ENCODE measurements at regions of chr1 and their contacts with region 1.

Region 1: DNA sequence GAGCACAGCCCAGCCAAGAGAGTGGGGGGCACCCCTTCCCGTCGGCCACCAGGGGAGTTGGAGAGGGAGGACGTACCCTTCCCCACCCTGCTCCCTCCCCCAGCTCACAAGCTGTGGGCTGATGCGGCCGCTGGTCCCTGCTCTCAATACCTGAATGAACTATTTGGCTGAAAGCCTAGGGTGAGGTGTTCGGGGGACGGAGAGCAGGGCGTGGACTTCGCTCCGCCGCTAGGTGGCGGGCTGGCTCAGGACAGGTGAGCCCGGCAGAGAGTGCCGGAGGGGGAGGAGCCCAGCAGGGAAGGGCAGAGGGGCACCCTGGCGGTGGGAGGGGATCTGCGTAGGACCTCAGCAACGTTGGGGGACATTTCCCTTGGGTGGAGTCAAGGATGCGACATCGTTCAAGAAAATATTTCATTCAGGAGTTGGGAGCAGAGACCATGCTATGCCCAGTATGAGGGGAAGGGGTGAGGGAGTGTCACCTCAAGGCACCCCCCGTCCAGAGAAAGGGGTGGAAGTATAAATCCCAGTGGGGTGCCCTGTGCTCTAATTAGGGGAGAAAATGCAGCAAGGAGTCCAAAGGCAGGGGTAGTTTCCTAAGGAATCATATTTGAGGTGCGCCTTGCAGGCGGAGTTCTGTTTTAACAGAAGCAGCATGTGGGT is 12.0 kb upstream of the RHBG start:
- DNase-seq: no peak
- H3K4me3 ChIP-seq: no peak overlapping the region
- H3K27me3 ChIP-seq: peaks cover 19% of the 10 kb centered on the region
- CTCF ChIP-seq: peak; percentile 98

Region 2: GRCh38 chr1:156336242-156336641 is 20.8 kb before region 1 on chr1:
- CTCF ChIA-PET with region 1: interaction called, 13 read pairs
- POLR2A ChIA-PET with region 1: no interaction called
- DNase-seq: no peak
- H3K4me3 ChIP-seq: no peak overlapping the region
- H3K27me3 ChIP-seq: no peaks in the 10 kb centered on the region
- CTCF ChIP-seq: 0 out of 2 replicates have a peak, but pooled peaks have one; percentile 15

Region 3: DNA sequence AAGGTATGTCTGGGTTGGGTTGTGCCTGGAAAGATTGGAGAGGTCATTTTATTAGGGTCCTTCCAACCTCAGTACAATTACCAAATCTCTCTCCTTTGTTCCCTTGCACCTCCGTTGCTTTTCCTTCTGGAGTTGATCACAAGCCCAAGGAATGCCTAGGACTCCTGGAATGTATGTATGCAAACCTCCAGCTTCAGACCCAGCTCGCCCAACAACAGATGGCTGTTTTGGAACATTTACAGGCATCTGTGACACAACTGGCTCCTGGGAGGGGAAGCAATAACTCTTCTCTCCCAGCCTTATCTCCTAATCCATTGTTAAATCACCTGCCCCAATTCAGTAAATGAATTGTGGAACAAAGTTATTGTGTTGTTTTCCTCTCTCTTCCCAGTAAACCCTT is 10.4 kb before region 1 on chr1:
- CTCF ChIA-PET with region 1: interaction called, 28 read pairs
- POLR2A ChIA-PET with region 1: no interaction called
- DNase-seq: peak; percentile 53
- H3K4me3 ChIP-seq: no peak overlapping the region
- H3K27me3 ChIP-seq: no peaks in the 10 kb centered on the region; the same call in 1 of the 2 replicates
- CTCF ChIP-seq: no peak

Region 4: DNA sequence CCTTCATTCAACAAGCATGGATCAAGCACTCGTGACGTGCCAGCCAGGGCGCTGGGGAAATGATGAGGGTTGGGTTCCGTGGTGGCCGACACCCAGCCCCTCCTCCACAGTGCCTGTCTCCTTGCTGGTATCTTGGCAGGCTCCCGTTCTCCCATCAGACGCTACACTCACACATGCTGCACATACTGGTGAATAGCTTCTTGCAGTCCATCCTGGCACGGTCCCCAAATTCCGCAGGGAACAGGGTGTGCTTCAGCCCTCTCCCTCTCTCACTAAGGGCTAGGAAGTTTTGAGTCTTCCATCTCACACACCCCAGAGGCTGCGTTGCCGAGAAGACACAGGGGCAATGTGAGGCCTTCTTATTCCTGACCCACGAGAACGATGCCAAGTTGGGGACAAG is 153.7 kb after region 1 on chr1:
- CTCF ChIA-PET with region 1: no interaction called
- POLR2A ChIA-PET with region 1: no interaction called
- DNase-seq: no peak
- H3K4me3 ChIP-seq: no peak overlapping the region
- H3K27me3 ChIP-seq: no peaks in the 10 kb centered on the region
- CTCF ChIP-seq: no peak

Region 5: DNA sequence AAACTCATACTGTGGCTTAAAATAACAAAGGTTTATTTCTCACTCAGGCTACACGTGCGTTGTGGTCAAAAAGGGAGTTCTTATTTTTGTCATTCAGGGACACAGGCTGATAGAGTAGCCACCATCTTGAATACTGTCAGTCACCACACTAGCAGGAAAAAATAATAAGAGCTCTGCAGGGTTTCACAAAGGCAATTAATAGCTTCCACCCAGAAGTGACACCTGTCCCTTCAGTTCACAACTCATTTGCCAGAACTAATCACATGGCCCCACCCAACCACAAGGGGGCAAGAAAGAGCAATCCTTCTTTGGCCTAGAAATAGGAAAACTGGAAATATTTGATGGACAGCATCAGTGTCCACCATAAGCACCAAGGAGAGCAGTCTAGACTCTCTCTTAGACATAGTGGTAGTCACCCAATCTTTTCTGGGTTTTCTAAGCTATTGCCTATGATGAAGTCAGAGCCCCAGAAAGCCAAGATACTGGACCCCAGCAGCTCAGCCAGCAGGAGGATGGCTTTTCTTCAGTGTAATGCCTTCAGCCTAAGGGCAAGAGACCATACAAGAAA is 270.4 kb after region 1 on chr1:
- CTCF ChIA-PET with region 1: no interaction called
- POLR2A ChIA-PET with region 1: no interaction called
- DNase-seq: no peak
- H3K4me3 ChIP-seq: no peak overlapping the region
- H3K27me3 ChIP-seq: peaks cover 30% of the 10 kb centered on the region
- CTCF ChIP-seq: peak; percentile 81